Activated naive CD4-positive, alpha-beta T cell treated with anti-CD3 and anti-CD28 coated beads for 36 hours (primary cell): ENCODE measurements at regions of chr10 and their contacts with region 1.

Region 1: GRCh38 chr10:113854011-113854760 is at the starts of genes DCLRE1A and NHLRC2:
- DNase-seq: peak; percentile 67
- H3K4me3 Mint-ChIP-seq: peak within 1 kb of the TSS; percentile 95
- H3K27ac Mint-ChIP-seq: peak within 1 kb of the TSS; percentile 98
- H3K4me1 Mint-ChIP-seq: peaks cover 35% of the 10 kb centered on the region
- H3K27me3 Mint-ChIP-seq: no peaks in the 10 kb centered on the region
- total RNA-seq, gene DCLRE1A: 8.1 to 8.7 TPM
- total RNA-seq, gene NHLRC2: 12.6 to 13.9 TPM

Region 2: DNA sequence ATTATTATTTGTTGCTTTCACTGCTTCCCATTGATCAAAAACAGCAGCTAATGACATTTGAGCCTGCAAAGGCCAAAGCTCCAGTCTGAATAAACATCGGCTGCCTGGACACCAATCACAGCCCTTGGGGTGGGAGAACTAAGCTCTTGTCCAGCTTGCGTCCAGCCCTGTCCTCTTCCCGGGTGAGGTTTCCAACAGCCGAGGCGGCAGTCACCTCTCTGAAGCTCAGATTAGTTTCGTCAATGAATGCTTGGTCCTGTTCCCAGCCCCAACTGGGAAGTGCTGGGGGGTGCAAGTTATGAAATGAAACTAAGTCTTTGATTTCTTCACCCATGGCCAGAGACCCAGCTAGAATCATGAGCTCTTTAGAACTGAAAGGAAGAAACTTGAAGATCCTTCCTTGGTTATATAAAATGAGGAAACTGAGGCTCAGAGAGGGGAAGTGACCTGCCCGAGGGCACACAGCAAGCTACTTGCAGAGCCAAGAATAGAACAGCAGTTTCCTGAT is 1018.2 kb before region 1 on chr10:
- CTCF ChIA-PET with region 1: no interaction called
- intact Hi-C with region 1: no loop called
- DNase-seq: no peak
- H3K4me3 Mint-ChIP-seq: no peak overlapping the region
- H3K27ac Mint-ChIP-seq: no peak overlapping the region
- H3K4me1 Mint-ChIP-seq: no peaks in the 10 kb centered on the region
- H3K27me3 Mint-ChIP-seq: no peaks in the 10 kb centered on the region

Region 3: DNA sequence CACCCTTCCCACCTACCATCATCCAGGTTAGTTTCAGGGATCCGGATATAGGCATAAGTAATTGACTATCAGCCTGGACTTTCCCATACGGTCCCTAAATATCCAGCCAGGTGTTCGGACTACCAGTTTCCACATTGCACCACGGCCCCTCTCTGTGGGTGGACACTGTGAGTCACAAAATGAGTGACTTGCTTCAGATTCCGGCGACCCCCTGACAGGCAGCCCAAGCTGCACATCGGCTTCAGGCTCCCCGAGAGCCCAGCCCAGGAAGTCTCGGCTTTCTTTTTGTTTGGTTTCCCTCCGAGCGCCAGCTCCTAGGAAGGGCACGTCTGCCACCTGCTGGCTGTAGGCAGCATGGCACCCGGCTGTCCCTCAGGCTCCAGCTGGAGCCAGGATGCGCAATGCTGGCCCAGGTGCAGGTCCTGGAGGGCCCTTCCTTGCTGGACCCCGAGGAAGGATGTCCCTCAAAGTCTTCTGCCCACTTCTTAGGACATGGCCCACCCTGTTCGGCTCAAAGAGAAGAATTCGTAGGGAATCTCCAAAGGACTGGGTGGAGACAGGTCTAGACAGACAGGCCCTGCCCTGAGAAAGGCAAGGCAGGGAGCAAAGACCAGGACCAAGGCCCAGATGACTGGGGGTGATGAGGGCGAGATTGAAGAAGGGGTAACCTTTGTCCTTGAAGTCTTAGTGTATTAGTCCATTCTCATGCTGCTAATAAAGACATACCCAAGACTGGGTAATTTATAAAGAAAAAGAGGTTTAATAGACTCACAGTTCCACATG is 290.7 kb before region 1 on chr10:
- CTCF ChIA-PET with region 1: no interaction called
- intact Hi-C with region 1: no loop called
- DNase-seq: peak; percentile 81
- H3K4me3 Mint-ChIP-seq: peak overlapping the region; percentile 57
- H3K27ac Mint-ChIP-seq: no peak overlapping the region
- H3K4me1 Mint-ChIP-seq: peaks cover 2% of the 10 kb centered on the region
- H3K27me3 Mint-ChIP-seq: no peaks in the 10 kb centered on the region

Region 4: DNA sequence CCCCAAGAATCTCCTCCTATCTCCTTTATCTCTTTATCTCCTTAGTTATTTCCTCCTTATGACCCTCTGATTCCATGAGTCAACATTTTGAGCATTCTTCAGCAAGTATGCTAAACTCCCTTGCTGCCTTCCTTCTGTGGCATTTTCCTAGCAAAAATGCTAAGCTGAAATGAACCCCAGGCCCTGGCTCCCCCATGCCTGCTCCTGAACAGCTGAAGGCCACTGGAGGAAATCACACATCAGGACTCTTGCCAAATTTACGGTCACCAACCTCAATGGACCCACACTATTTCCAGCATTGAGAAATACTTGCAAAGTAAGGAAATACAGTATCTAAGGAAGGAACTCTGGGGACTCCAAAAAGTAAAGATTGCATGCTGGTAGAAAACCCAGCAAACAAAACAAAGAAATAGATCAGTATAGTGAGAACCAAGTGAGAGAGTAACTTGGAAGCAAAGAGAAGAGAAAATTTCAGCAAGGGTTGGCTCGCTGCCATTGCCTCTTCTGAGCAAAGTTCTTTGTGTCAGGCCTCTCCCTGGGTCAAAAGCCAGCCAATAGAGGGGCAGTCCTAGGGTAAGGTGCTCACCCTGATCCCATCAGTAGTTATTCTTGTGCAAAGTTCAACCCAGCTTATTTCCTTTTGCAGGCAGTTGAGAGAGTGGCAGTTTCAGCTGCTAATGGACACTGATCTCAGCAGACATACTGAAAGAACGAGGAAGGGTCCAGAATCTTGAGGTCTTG is 107.8 kb before region 1 on chr10:
- CTCF ChIA-PET with region 1: no interaction called
- intact Hi-C with region 1: no loop called
- DNase-seq: no peak
- H3K4me3 Mint-ChIP-seq: no peak overlapping the region
- H3K27ac Mint-ChIP-seq: no peak overlapping the region
- H3K4me1 Mint-ChIP-seq: no peaks in the 10 kb centered on the region
- H3K27me3 Mint-ChIP-seq: peaks cover 14% of the 10 kb centered on the region

Region 5: GRCh38 chr10:113802997-113803396 is 51.2 kb before region 1 on chr10:
- CTCF ChIA-PET with region 1: interaction called, 3 read pairs
- intact Hi-C with region 1: loop called (anchors 5 kb)
- DNase-seq: no peak
- H3K4me3 Mint-ChIP-seq: no peak overlapping the region
- H3K27ac Mint-ChIP-seq: no peak overlapping the region
- H3K4me1 Mint-ChIP-seq: no peaks in the 10 kb centered on the region
- H3K27me3 Mint-ChIP-seq: peaks cover 10% of the 10 kb centered on the region

Region 6: DNA sequence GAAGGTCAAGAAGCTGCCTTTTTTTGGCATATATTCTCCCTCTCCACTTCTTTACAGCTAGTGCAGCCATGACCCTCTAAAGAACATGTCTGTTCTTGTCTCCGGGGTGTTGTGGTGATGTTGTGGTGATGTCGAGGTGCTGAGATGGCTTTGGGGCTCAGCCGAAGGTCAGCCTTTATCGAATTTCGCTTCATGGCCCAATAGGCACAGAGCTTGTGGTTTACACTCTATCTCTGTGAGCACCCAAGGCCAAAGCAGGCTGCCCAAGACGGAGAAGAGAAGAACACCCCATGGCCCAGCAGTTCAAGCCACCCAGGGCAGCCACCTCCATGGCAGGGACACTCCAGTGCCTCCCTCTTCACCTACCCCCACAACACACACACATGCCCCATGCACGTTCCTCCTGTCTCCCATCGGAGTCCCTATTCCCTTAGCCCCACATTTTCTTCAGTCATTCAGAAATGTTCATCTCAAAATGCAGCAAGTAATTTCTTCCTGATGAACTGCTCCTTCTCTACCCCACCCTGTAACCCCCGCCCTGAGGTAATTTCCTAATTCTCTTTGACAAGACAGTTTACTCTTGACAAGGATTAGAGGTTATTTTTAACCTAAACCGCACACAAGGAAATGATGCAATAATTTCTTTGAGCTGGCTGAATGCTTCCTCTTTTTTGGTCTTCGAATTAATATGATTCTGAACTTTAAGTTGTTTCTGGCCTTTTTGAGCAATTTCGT is 170.9 kb after region 1 on chr10:
- CTCF ChIA-PET with region 1: no interaction called
- intact Hi-C with region 1: loop called (anchors 2 kb)
- DNase-seq: peak; percentile 54
- H3K4me3 Mint-ChIP-seq: peak overlapping the region; percentile 28
- H3K27ac Mint-ChIP-seq: peak overlapping the region; percentile 64
- H3K4me1 Mint-ChIP-seq: peaks cover 30% of the 10 kb centered on the region
- H3K27me3 Mint-ChIP-seq: peaks cover 32% of the 10 kb centered on the region

Region 7: GRCh38 chr10:114103284-114103683 is 249.1 kb after region 1 on chr10:
- CTCF ChIA-PET with region 1: interaction called, 3 read pairs
- intact Hi-C with region 1: loop called (anchors 1 kb)
- DNase-seq: no peak
- H3K4me3 Mint-ChIP-seq: no peak overlapping the region
- H3K27ac Mint-ChIP-seq: no peak overlapping the region
- H3K4me1 Mint-ChIP-seq: peaks cover 18% of the 10 kb centered on the region
- H3K27me3 Mint-ChIP-seq: peaks cover 31% of the 10 kb centered on the region

Region 8: DNA sequence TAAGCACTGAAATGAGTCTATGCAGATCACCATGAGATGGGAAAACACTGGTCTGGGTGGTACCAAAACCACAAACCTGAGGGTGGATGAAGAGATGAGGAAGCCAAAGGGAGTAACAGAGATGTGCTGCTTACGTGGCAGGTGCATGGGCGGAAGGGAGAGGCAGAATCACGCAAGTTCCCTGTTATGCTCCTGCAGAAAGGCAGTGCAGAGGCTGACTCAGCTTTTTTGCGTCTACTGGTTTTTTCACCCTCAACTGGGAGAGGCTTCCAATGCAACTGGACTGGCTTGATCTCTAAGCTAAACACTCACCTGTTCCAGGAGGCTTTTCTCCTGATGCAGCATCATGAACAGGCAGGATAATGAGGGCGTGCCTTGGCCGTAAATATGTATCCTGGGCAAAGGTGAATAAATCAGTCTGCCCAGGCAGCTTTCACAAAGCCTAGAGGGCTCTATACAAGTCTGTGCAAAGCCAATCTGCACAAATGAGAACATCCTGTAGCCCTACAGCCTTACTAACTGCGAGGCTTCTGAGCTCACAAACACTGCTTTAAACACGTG is 645.5 kb after region 1 on chr10:
- CTCF ChIA-PET with region 1: no interaction called
- intact Hi-C with region 1: loop called (anchors 10 kb)
- DNase-seq: peak; percentile 95
- H3K4me3 Mint-ChIP-seq: peak overlapping the region; percentile 56
- H3K27ac Mint-ChIP-seq: peak overlapping the region; percentile 96
- H3K4me1 Mint-ChIP-seq: peaks cover 87% of the 10 kb centered on the region
- H3K27me3 Mint-ChIP-seq: no peaks in the 10 kb centered on the region

Region 9: GRCh38 chr10:114821293-114821914 is 967.2 kb after region 1 on chr10 and contains the start of gene FHIP2A:
- CTCF ChIA-PET with region 1: no interaction called
- intact Hi-C with region 1: loop called (anchors 5 kb)
- DNase-seq: peak; percentile 80
- H3K4me3 Mint-ChIP-seq: peak within 1 kb of the TSS; percentile 89
- H3K27ac Mint-ChIP-seq: peak within 1 kb of the TSS; percentile 83
- H3K4me1 Mint-ChIP-seq: peaks cover 29% of the 10 kb centered on the region
- H3K27me3 Mint-ChIP-seq: no peaks in the 10 kb centered on the region
- total RNA-seq, gene FHIP2A: 8.7 to 11.4 TPM